WTC11 (cell line): ENCODE measurements at regions of chr17 and their contacts with region 1.

Region 1: DNA sequence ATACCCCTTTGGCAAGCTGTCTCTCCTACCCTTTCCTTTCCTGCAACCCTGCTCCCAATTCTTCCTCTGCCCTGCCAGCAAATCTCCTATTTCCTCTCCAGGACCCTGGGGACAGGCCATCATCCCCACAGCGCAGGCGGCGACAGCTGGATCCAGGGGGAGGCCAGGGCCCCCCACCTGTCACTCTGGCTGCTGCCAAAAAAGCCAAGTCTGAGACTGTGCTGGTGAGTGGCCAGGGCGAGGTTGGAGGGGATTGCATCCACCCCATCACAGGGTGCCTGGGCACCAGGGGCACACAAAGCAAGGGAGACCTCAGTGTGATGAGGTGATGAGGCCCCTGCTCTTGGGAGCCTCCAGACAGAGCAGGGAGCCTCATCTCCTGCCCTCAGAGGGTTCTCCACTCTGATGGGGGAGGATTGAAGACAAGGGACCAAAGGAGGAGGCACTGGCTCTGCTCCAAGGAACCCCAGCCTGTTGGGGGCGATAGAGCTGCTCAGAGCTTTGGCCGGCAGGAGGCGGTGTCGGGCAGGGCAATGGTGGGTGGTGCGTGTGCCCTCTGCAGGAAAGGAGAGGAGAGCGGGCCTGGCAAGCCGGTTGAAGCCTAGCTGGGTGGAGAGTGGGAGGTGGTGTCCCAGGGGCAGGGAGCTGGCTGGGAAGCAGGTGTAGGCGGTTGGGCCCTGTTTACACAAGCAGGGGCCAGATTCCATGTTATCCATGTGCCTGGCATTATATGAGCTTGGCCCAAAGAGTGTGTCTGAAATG is 15.6 kb upstream of the PDK2 start:
- DNase-seq: peak; percentile 86
- ATAC-seq: peak; percentile 83
- H3K4me3 Mint-ChIP-seq: no peak overlapping the region
- H3K27ac Mint-ChIP-seq: no peak overlapping the region
- H3K4me1 Mint-ChIP-seq: peaks cover 11% of the 10 kb centered on the region
- H3K27me3 Mint-ChIP-seq: no peaks in the 10 kb centered on the region
- CTCF ChIP-seq: peak; percentile 53; the same call in 1 of the 2 replicates

Region 2: GRCh38 chr17:49959183-49959935 is 120.2 kb before region 1 on chr17:
- CTCF ChIA-PET with region 1: no interaction called
- POLR2A ChIA-PET with region 1: no interaction called
- DNase-seq: peak; percentile 51
- ATAC-seq: peak; percentile 43
- H3K4me3 Mint-ChIP-seq: no peak overlapping the region
- H3K27ac Mint-ChIP-seq: no peak overlapping the region
- H3K4me1 Mint-ChIP-seq: peaks cover 22% of the 10 kb centered on the region
- H3K27me3 Mint-ChIP-seq: peaks cover 75% of the 10 kb centered on the region
- CTCF ChIP-seq: no peak

Region 3: GRCh38 chr17:49987681-49988441 is 91.7 kb before region 1 on chr17:
- CTCF ChIA-PET with region 1: no interaction called
- POLR2A ChIA-PET with region 1: no interaction called
- DNase-seq: no peak
- ATAC-seq: peak; percentile 48
- H3K4me3 Mint-ChIP-seq: peak overlapping the region; percentile 27; the same call in 1 of the 2 replicates
- H3K27ac Mint-ChIP-seq: no peak overlapping the region
- H3K4me1 Mint-ChIP-seq: peaks cover 21% of the 10 kb centered on the region
- H3K27me3 Mint-ChIP-seq: peaks cover 94% of the 10 kb centered on the region
- CTCF ChIP-seq: no peak

Region 4: DNA sequence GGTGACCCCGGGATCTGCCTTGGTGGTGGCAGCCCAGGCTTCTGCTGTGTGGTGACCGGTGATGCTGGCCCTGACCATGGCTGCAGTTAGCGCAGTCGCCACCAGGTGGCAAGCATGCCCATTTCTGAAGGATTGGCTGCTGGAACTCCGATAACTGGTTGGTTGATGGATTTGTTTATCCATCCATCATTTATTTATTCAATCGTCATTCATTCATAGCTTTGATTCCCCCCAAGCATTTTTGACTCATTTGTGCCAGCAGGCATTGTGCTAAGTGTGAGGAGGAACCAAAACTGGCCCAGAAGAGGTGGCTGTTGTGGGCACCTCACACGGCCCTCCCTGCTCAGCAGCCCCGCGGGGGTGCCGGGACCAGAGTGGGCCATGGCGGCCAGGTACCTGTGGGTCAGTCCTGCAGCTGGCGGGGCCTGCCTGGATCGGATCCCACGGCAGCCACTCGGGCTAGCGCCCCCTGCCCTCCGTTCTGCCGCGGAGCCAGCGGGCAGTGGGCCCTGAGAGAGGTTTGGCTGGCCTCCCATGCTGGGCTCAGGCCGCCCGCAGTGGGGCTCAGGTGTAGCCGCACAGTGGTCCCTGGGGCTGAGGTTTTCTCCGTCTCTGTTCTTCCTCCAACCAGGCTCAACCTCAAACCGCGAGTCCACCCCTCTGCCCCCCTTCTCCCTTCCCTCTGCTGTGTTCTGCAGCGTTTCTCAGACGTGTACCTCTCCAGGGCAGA is 52.4 kb before region 1 on chr17:
- CTCF ChIA-PET with region 1: interaction called, 64 read pairs
- POLR2A ChIA-PET with region 1: no interaction called
- DNase-seq: peak; percentile 92
- ATAC-seq: peak; percentile 67
- H3K4me3 Mint-ChIP-seq: peak overlapping the region; percentile 53
- H3K27ac Mint-ChIP-seq: no peak overlapping the region
- H3K4me1 Mint-ChIP-seq: peaks cover 25% of the 10 kb centered on the region
- H3K27me3 Mint-ChIP-seq: peaks cover 11% of the 10 kb centered on the region
- CTCF ChIP-seq: peak; percentile 92

Region 5: DNA sequence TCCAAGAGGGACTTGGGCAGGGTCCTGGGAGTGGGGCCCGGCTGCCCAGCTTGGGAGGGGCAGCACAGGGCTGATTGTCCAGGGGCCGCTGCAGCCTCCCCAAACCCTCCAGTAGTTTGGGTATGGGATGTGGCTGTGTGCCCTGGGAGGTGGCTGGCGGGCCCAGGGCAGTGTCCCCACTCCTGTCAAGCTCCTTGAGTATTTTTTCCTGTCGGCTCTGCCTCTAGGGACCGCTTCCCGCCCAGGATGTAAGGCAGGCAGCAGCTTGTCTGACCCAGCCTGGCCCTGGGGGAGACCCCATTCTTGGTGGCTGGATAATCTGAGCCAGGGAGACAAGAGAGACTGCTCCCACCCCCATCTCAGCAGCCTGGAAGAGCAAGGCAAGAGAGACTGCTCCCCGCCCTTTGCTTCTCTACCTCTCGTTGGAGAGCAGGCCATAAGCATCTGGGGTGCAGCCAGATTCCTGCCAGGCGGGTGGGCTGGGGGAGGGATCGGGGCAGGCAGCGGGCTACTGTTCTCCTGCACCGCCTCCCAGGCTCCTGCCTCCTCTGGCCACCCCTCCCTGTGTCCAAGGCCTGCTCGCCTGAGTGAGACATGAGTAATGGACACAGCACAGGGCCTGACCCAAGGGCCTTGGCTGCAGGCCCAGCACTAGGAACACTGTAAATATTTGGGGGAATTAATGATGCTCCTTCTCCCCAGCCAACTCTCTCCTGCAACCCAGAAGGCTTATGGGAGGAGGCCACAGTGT is 42.0 kb before region 1 on chr17:
- CTCF ChIA-PET with region 1: interaction called, 64 read pairs
- POLR2A ChIA-PET with region 1: no interaction called
- DNase-seq: no peak
- ATAC-seq: peak; percentile 23
- H3K4me3 Mint-ChIP-seq: no peak overlapping the region
- H3K27ac Mint-ChIP-seq: no peak overlapping the region
- H3K4me1 Mint-ChIP-seq: peaks cover 11% of the 10 kb centered on the region
- H3K27me3 Mint-ChIP-seq: peaks cover 5% of the 10 kb centered on the region
- CTCF ChIP-seq: no peak

Region 6: GRCh38 chr17:50055426-50056230 is 23.9 kb before region 1 on chr17 and contains the start of gene ITGA3:
- CTCF ChIA-PET with region 1: interaction called, 67 read pairs
- POLR2A ChIA-PET with region 1: interaction called, 3 read pairs
- DNase-seq: peak; percentile 90
- ATAC-seq: peak; percentile 65
- H3K4me3 Mint-ChIP-seq: peak within 1 kb of the TSS; percentile 89
- H3K27ac Mint-ChIP-seq: peak within 1 kb of the TSS; percentile 99
- H3K4me1 Mint-ChIP-seq: peaks cover 56% of the 10 kb centered on the region
- H3K27me3 Mint-ChIP-seq: peaks cover 22% of the 10 kb centered on the region
- CTCF ChIP-seq: no peak
- total RNA-seq, gene ITGA3: 35.3 to 44.2 TPM (median 35.5 TPM) in 3 replicates

Region 7: GRCh38 chr17:50064258-50065001 is 15.1 kb before region 1 on chr17:
- CTCF ChIA-PET with region 1: interaction called, 15 read pairs
- POLR2A ChIA-PET with region 1: no interaction called
- DNase-seq: no peak
- ATAC-seq: peak; percentile 61
- H3K4me3 Mint-ChIP-seq: no peak overlapping the region
- H3K27ac Mint-ChIP-seq: peak overlapping the region; percentile 27; the same call in 1 of the 2 replicates
- H3K4me1 Mint-ChIP-seq: peaks cover 5% of the 10 kb centered on the region
- H3K27me3 Mint-ChIP-seq: no peaks in the 10 kb centered on the region
- CTCF ChIP-seq: no peak

Region 8: GRCh38 chr17:50101346-50102163 is 22.0 kb after region 1 on chr17:
- CTCF ChIA-PET with region 1: interaction called, 14 read pairs
- POLR2A ChIA-PET with region 1: no interaction called
- DNase-seq: no peak
- ATAC-seq: peak; percentile 66
- H3K4me3 Mint-ChIP-seq: no peak overlapping the region; the same call in 1 of the 2 replicates
- H3K27ac Mint-ChIP-seq: no peak overlapping the region
- H3K4me1 Mint-ChIP-seq: peaks cover 18% of the 10 kb centered on the region
- H3K27me3 Mint-ChIP-seq: no peaks in the 10 kb centered on the region
- CTCF ChIP-seq: no peak